ENCODE measurements at regions of chr22 and their contacts with region 1.

Region 1: DNA sequence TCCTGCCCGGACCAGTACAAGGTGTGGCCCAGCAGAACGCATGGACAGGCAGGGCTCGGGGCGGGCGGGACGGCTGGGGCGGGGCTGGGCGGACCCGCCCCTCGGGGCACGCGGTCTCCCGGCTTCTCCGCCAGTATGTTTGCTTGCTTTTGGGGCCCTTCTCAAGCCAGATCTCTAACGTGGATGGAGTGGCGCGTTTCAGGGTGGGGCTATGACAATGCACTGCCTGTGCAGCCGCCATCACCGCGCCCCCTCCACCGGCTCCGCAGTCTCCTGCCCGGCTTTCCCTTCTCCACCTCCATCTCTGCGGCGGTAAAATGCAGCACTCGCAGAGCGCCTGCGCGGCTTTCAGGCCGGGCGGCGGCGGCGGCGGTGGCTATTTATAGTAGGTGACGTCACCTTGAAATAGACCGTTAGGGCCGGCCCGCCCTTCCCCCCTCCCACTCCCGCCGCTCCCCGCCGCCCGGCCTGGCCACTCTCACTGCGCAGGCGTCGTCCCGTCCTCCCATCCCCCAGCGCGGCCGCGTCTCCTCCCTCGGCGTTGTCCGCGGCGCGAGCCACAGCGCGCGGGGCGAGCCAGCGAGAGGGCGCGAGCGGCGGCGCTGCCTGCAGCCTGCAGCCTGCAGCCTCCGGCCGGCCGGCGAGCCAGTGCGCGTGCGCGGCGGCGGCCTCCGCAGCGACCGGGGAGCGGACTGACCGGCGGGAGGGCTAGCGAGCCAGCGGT is at the start of gene YWHAH:
- DNase-seq: peak; percentile 91 to 99 (median 94)

Region 2: DNA sequence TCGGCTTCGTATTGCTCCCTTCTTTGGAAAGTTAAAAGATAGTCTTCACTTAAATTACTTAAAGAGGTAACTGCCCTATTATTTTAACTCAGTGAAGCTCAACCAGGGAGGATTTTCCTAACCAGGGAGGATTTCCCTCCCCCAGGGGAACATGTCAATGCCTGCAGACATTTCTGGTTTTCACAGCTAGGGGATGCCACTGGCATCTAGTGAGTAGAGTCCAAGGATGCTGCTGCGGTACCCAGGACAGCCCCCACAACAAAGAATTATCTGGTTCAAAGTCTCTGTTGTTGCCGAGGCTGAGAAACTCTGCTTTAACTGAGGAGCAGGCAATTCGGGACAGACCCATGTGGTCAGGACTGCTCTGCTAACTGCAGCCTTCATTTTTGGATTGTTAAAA is 108.1 kb before region 1 on chr22:
- intact Hi-C with region 1: loop called (anchors 10 kb)
- DNase-seq: peak in 2 of 10 donors; percentile 11 to 74

Region 3: GRCh38 chr22:31897842-31898805 is 46.0 kb before region 1 on chr22:
- intact Hi-C with region 1: loop called (anchors 5 kb)
- DNase-seq: peak in 2 of 10 donors; percentile 21 to 79